Mucosa of descending colon (tissue), 3 donors: ENCODE measurements at regions of chr10 and their contacts with region 1.

Region 1: GRCh38 chr10:103605359-103606095 is 112.0 kb downstream of the NEURL1 start:
- DNase-seq: peak in 1 of 3 donors; percentile 70
- ATAC-seq: peak; percentile 42
- H3K4me3 ChIP-seq: no peak overlapping the region
- H3K4me1 ChIP-seq: no peaks in the 10 kb centered on the region
- CTCF ChIP-seq: peak; percentile 56

Region 2: GRCh38 chr10:103451831-103452505 is 153.6 kb before region 1 on chr10 and contains the start of gene CALHM2:
- intact Hi-C with region 1: no loop called
- DNase-seq: peak; percentile 64 to 79 (median 75)
- ATAC-seq: peak; percentile 79
- H3K4me3 ChIP-seq: peak within 1 kb of the TSS; percentile 36
- H3K4me1 ChIP-seq: peaks cover 21% of the 10 kb centered on the region
- CTCF ChIP-seq: no peak
- total RNA-seq, gene CALHM2: 5.8 to 16.8 (median 12.3) TPM

Region 3: DNA sequence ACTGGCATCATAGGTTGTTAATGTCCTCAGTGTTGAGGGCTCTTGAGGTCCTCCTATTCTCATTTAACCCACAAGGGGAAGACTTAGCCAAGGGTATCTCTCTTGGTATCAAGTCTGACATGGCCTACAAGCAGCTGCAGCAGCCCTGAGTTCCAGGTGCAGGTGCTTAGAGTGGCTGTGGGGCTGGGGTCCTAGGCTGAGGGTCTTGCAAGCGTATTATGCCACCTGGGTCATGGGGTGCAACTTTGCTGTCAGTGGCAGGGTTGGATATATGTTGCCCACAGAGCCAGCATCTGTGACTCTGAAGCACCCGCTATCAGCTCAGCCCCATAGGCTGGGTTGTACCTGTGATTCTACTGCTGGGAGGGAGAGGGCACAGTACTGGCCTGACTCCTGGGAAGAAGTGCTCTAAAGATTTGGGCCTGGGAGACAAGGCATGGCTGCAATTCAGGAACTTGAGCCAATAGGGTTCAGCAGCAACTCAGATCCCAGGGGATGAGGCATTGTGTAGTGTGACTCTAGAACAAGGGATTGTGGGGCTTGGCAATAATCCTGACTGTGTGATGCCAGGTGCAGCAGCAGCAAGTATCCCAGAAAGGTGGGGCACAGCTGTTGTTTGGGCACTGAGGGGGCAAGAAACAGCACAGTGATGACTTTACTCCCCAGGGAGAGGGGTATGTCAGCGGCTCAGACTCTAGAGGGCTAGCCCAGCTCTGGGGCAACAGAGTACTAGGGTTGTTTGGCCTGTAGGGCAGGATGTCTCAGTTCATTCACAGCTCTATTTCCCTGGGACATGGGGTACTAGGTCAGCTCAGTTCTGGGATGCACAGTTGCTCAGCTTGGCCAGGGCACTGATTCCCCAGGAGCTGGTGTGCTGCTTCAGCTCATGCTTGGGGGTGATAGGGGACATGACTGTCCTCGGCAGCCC is 70.7 kb before region 1 on chr10:
- intact Hi-C with region 1: no loop called
- DNase-seq: no peak
- ATAC-seq: no peak
- H3K4me3 ChIP-seq: no peak overlapping the region
- H3K4me1 ChIP-seq: no peaks in the 10 kb centered on the region
- CTCF ChIP-seq: no peak

Region 4: GRCh38 chr10:103685880-103686669 is 80.5 kb after region 1 on chr10:
- intact Hi-C with region 1: loop called (anchors 5 to 10 kb)
- DNase-seq: peak; percentile 78 to 90 (median 89)
- ATAC-seq: peak; percentile 89
- H3K4me3 ChIP-seq: no peak overlapping the region
- H3K4me1 ChIP-seq: peaks cover 22% of the 10 kb centered on the region
- CTCF ChIP-seq: peak; percentile 90

Region 5: GRCh38 chr10:103712570-103713498 is 107.3 kb after region 1 on chr10:
- intact Hi-C with region 1: no loop called
- DNase-seq: peak in 2 of 3 donors; percentile 83 to 96
- ATAC-seq: peak; percentile 78
- H3K4me3 ChIP-seq: no peak overlapping the region
- H3K4me1 ChIP-seq: no peaks in the 10 kb centered on the region
- CTCF ChIP-seq: peak; percentile 79